Heart left ventricle (tissue), 16 donors: ENCODE measurements at regions of chr1 and their contacts with region 1.

Region 1: GRCh38 chr1:16440470-16441281 is at the start of gene NECAP2:
- DNase-seq: peak; percentile 93 to 97 (median 95)
- ATAC-seq: peak; percentile 89 to 97 (median 96)
- H3K4me3 ChIP-seq: peak within 1 kb of the TSS; percentile 59 to 99 (median 98)
- H3K27ac ChIP-seq: peak within 1 kb of the TSS; percentile 58 to 98 (median 86)
- H3K4me1 ChIP-seq: peaks cover 0 to 54% (median 29%) of the 10 kb centered on the region in 12 donors
- H3K27me3 ChIP-seq: no peaks in the 10 kb centered on the region
- CTCF ChIP-seq: peak; percentile 81 to 98 (median 92)
- POLR2A ChIP-seq: peak in 1 of 2 donors; percentile 59
- total RNA-seq, gene NECAP2: 10.7 to 53.0 (median 12.1) TPM

Region 2: GRCh38 chr1:16375521-16376359 is 64.9 kb before region 1 on chr1:
- intact Hi-C with region 1: loop called in 2 of 10 experiments (anchors 5 kb)
- DNase-seq: peak in 1 of 5 donors; percentile 47
- ATAC-seq: peak in 3 of 4 donors; percentile 52 to 63 (median 58)
- H3K4me3 ChIP-seq: peak overlapping the region in 2 of 12 donors; percentile 4 to 8
- H3K27ac ChIP-seq: peak overlapping the region; percentile 25 to 81 (median 72)
- H3K4me1 ChIP-seq: peaks cover 9 to 89% (median 66%) of the 10 kb centered on the region in 12 donors
- H3K27me3 ChIP-seq: no peaks in the 10 kb centered on the region
- CTCF ChIP-seq: no peak
- POLR2A ChIP-seq: no peak

Region 3: DNA sequence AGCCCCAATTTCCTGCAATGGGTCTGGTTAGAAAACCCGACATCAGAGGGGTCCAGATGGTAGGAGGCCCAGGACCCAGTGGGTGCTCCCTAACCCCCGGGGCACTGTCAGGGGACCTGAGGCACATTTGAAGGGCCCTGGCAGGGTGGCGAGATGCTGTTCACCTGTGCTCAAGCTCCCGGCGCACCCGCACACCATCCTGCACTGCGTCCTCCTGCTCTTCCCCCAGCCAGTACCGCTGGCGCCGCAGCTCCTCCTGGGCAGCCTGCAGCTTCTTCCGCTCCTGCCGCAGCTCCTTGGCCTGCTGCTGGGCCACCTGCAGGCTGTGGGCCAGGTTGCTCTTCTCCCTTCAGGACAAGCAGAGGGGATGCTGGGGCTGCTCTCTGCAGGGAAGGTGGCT is 37.4 kb after region 1 on chr1:
- intact Hi-C with region 1: no loop called
- DNase-seq: no peak
- ATAC-seq: no peak
- H3K4me3 ChIP-seq: no peak overlapping the region
- H3K27ac ChIP-seq: no peak overlapping the region
- H3K4me1 ChIP-seq: no peaks in the 10 kb centered on the region
- H3K27me3 ChIP-seq: no peaks in the 10 kb centered on the region
- CTCF ChIP-seq: no peak
- POLR2A ChIP-seq: no peak